Activated CD4-positive, alpha-beta T cell treated with anti-CD3 and anti-CD28 coated beads, Interleukin-2, amount 10 ng/mL, durations not matched to agents 24 days and 14 days (primary cell): ENCODE measurements at regions of chr5 and their contacts with region 1.

Region 1: GRCh38 chr5:124920909-124921666 is 174.6 kb upstream of the ZNF608 start:
- DNase-seq: no peak
- H3K4me3 Mint-ChIP-seq: no peak overlapping the region
- H3K27ac Mint-ChIP-seq: no peak overlapping the region
- H3K4me1 Mint-ChIP-seq: peaks cover 2% of the 10 kb centered on the region
- H3K27me3 Mint-ChIP-seq: no peaks in the 10 kb centered on the region

Region 2: DNA sequence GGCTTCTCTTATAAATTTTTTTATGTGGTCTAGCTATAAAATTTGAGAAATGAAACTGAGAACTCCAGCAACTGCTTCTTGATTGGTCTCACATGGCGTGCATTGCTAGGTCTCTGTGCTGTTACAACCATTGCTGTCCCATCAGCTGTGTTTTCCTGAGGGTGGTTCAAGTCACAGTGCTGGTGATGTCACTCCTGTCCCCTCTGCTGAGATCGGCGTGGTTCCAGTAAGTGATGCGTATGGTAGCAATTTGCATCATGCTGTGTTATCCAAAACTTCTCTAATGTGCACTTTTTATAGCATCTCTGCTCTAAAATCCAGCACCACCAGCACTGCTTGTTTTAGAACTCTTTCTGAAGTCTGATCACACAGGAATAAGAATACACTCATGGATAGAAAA is 62.1 kb before region 1 on chr5:
- intact Hi-C with region 1: no loop called
- DNase-seq: no peak
- H3K4me3 Mint-ChIP-seq: no peak overlapping the region
- H3K27ac Mint-ChIP-seq: no peak overlapping the region
- H3K4me1 Mint-ChIP-seq: no peaks in the 10 kb centered on the region
- H3K27me3 Mint-ChIP-seq: no peaks in the 10 kb centered on the region

Region 3: GRCh38 chr5:124935065-124935464 is 14.0 kb after region 1 on chr5:
- intact Hi-C with region 1: loop called (anchors 1 kb)
- DNase-seq: peak; percentile 69
- H3K4me3 Mint-ChIP-seq: no peak overlapping the region
- H3K27ac Mint-ChIP-seq: peak overlapping the region; percentile 67
- H3K4me1 Mint-ChIP-seq: peaks cover 6% of the 10 kb centered on the region
- H3K27me3 Mint-ChIP-seq: no peaks in the 10 kb centered on the region